ENCODE measurements at regions of chr14 and their contacts with region 1.

Region 1: GRCh38 chr14:55446218-55446654 is 5.8 kb upstream of the TBPL2 start:
- DNase-seq: no peak
- ATAC-seq: peak; percentile 72
- H3K4me3 ChIP-seq: no peak overlapping the region
- H3K27ac ChIP-seq: no peak overlapping the region
- H3K4me1 ChIP-seq: peaks cover 0 to 3% of the 10 kb centered on the region in 2 donors
- H3K27me3 ChIP-seq: no peaks in the 10 kb centered on the region

Region 2: GRCh38 chr14:55579724-55580469 is 133.7 kb after region 1 on chr14 and contains the start of gene KTN1:
- intact Hi-C with region 1: loop called (anchors 2 to 10 kb)
- DNase-seq: peak; percentile 88 to 94
- ATAC-seq: peak; percentile 96
- H3K4me3 ChIP-seq: peak within 1 kb of the TSS; percentile 88
- H3K27ac ChIP-seq: peak within 1 kb of the TSS; percentile 89 to 92
- H3K4me1 ChIP-seq: peaks cover 4 to 10% of the 10 kb centered on the region in 2 donors
- H3K27me3 ChIP-seq: no peaks in the 10 kb centered on the region
- total RNA-seq, gene KTN1: 191 to 216 TPM

Region 3: DNA sequence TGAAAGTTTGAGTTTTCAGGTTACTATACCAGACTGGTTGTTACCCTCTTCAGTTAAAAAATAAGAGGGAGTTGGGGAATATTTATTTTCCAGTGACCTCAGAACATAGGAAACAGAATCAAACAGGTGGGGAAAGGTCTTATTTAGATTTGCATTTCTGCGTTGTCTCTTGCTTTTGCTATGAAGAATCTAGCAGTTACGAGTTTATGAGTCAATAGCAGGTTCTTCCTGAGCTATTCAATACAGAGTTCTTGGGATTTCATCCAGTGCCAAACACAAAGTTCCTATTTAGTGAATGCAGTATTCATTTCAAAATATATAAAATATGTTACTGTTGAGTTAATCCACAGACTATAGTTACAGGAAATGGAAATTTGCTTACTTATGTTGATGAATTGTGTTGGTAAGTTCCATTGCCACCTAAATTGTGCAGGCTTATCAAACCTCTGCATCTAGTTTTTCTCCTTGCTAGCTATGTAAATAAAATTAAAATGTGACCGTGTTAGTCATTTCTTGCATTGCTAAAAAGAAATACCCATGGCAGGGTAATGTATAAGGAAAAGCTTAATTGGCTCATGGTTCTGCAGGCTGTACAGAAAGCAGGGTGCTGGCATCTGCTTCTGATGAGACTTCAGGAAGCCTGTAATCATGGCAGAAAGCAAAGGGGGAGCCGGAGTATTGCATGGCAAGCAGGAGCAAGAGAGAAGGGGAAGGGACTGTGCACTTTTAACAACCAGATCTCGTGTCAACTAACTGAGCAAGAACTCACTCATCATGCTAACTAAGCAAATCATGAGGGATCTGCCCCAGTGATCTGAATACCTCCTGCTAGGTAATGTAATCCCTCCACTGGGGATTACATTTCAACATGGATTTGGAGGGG is 244.0 kb after region 1 on chr14:
- intact Hi-C with region 1: loop called in 1 of 2 experiments (anchors 10 kb)
- DNase-seq: no peak
- ATAC-seq: no peak
- H3K4me3 ChIP-seq: no peak overlapping the region
- H3K27ac ChIP-seq: no peak overlapping the region
- H3K4me1 ChIP-seq: no peaks in the 10 kb centered on the region
- H3K27me3 ChIP-seq: no peaks in the 10 kb centered on the region

Measured in aorta (tissue), 5 donors.